Posterior vena cava (tissue), 2 donors: ENCODE measurements at regions of chr2 and their contacts with region 1.

Region 1: DNA sequence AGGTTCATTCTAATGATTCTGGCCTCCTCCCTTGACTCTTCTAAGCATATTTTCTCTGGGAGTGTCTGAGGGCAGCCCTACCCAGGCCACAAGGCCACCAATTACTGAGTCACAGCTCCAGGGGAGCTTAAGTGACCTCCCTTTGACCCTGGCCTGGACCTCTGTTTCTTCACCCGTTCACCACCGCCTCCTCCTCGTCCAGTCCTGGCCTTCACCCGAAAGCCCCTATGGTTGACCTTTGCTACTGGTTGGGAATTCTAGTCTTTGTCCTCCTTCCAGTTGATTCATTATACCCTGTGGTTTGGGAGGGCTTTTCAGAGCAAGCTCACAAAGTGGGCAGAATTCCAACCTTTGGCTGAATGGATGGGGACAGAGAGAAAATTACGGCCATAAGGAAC is 72.6 kb downstream of the NRP2 start:
- DNase-seq: no peak

Region 2: GRCh38 chr2:205706769-205707381 is 48.0 kb before region 1 on chr2:
- intact Hi-C with region 1: loop called in 1 of 2 experiments (anchors 5 kb)
- DNase-seq: peak; percentile 92

Region 3: GRCh38 chr2:205734436-205735037 is 20.4 kb before region 1 on chr2:
- intact Hi-C with region 1: loop called in 1 of 2 experiments (anchors 1 kb)
- DNase-seq: no peak